H1 (cell line): ENCODE measurements at regions of chr12 and their contacts with region 1.

Region 1: DNA sequence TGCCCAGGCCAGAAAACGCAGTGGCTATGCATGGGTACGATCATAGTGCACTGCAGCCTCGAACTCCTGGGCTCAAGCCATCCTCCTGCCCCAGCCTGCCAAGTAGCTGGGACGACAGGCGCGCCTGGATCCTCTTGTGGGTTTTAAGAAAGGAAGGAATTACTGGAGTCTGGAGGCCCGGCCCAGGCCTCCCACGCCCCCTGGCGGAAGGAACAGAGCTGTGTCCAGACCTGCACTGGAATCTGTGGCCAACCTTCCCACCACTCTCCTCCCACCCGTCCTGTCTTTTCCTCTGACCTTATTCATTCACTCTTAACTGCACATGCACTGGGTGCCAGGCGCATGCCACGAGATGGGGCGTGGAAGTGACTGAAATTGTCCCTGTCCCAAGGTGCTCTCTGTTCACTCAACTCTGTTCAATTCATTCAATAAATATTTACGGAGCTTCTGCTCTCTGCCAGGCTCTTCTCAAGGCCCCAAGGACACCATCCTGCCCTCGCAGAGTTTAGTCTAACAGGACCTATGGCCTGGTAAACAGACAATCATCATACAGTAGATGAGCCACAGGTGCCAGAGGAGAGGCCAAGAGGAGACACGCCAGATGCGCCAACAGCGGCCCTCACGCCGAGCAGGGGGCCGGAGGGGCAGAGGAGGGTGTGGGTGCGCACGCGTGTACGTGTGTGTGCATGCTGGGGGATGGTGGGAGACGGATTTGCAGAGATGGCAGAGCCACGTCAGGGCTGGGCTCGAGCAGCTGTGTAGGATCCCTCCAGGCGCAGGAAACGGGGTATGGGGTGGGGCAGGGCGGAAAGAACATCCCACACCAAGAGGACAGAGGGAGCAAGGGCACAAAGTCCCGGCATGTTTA is 13.7 kb upstream of the TMEM106C start:
- DNase-seq: peak; percentile 61 to 87
- H3K4me3 ChIP-seq: no peak overlapping the region
- H3K27ac ChIP-seq: no peak overlapping the region
- H3K4me1 ChIP-seq: no peaks in the 10 kb centered on the region; a peak in 2 of 7 replicates
- H3K27me3 ChIP-seq: no peaks in the 10 kb centered on the region; a peak in 1 of 7 replicates
- CTCF ChIP-seq: peak in 2 of 3 experiments; percentile 92 to 93; a peak in 3 of 4 replicates
- EP300 ChIP-seq: no peak
- POLR2A ChIP-seq: no peak
- RAD21 ChIP-seq: peak; percentile 78 to 85

Region 2: DNA sequence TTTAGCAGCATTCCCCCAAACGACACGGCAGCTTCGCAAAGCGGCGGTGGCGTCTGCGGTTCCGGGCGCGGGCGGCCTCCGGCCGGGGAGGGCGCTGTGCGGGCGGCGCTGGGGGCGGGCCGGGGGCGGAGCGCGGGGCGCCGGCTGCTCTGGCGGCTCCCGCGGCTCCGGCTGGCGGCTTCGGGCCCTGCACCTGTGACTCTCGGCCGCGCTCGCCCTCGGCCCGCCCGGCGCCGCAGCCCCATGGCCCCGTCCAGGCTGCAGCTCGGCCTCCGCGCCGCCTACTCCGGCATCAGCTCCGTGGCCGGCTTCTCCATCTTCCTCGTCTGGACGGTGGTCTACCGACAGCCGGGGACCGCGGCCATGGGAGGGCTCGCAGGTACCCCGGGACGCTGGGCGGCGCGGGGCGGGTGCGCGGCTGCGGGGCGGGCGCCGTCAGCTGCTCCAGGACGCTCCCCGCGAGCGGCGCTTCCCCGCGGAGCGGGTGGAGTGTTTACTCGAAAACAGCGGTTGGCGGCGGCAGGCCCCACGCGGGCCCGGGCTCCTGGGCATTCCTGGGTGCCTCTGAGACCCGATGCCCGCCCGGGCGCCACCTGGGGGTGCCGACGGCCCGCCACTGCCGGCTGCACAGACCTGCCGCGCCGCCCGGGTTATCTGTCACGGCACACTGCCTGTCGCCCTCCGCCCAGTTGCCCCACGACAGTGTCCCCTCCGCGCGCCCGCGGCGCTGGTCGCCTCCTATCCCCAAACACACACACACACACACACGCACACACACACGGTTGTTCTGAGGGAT is 176.4 kb before region 1 on chr12 and contains the start of gene SLC48A1:
- CTCF ChIA-PET with region 1: no interaction called
- POLR2A ChIA-PET with region 1: no interaction called
- DNase-seq: peak in 1 of 2 experiments; percentile 85
- H3K4me3 ChIP-seq: peak within 1 kb of the TSS; percentile 55 to 91 (median 56)
- H3K27ac ChIP-seq: no peak within 1 kb of the TSS
- H3K4me1 ChIP-seq: peaks cover 9 to 17% (median 12%) of the 10 kb centered on the region in 4 experiments
- H3K27me3 ChIP-seq: peaks cover 0 to 17% (median 8%) of the 10 kb centered on the region in 4 experiments; a peak in 4 of 7 replicates
- CTCF ChIP-seq: peak in 2 of 3 experiments; percentile 38 to 55; a peak in 3 of 4 replicates
- EP300 ChIP-seq: no peak
- POLR2A ChIP-seq: no peak
- RAD21 ChIP-seq: 0 out of 4 replicates have a peak, but pooled peaks of 1 of the 2 experiments have one; percentile 2
- total RNA-seq, gene SLC48A1: 14.0 and 14.1 TPM in 2 replicates

Region 3: GRCh38 chr12:47894068-47894467 is 55.6 kb before region 1 on chr12:
- CTCF ChIA-PET with region 1: interaction called, 27 read pairs
- POLR2A ChIA-PET with region 1: interaction called, 3 read pairs
- DNase-seq: no peak
- H3K4me3 ChIP-seq: no peak overlapping the region
- H3K27ac ChIP-seq: no peak overlapping the region
- H3K4me1 ChIP-seq: no peaks in the 10 kb centered on the region
- H3K27me3 ChIP-seq: peaks cover 0 to 6% (median 3%) of the 10 kb centered on the region in 4 experiments; a peak in 3 of 7 replicates
- CTCF ChIP-seq: no peak
- EP300 ChIP-seq: no peak
- POLR2A ChIP-seq: no peak
- RAD21 ChIP-seq: no peak

Region 4: DNA sequence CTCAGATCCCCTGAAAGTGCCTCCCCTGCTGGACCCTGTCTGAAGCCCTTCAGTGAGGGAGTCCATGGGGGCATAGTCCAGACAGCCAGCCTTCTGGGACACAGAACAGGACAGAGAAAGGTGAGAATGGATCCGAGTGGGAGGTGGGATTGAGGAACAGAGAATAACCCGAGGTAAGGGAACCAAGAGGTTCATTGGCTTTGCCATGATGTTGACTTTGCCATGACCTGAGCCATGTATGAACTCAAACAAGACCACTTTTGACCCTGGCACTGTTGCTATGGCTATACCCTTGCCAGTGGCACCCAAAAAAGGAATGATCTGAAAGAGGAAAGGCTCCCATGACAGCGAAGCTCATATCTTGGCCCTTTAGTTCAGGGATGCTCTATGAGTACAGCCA is 22.3 kb before region 1 on chr12:
- CTCF ChIA-PET with region 1: interaction called, 38 read pairs
- POLR2A ChIA-PET with region 1: no interaction called
- DNase-seq: no peak
- H3K4me3 ChIP-seq: no peak overlapping the region
- H3K27ac ChIP-seq: no peak overlapping the region
- H3K4me1 ChIP-seq: no peaks in the 10 kb centered on the region
- H3K27me3 ChIP-seq: peaks cover 2 to 7% (median 3%) of the 10 kb centered on the region in 4 experiments; a peak in 2 of 7 replicates
- CTCF ChIP-seq: no peak
- EP300 ChIP-seq: no peak
- POLR2A ChIP-seq: no peak
- RAD21 ChIP-seq: no peak

Region 5: GRCh38 chr12:47963340-47964040 is 13.8 kb after region 1 on chr12 and contains the start of gene TMEM106C:
- CTCF ChIA-PET with region 1: interaction called, 82 read pairs
- POLR2A ChIA-PET with region 1: no interaction called
- DNase-seq: peak; percentile 87 to 97
- H3K4me3 ChIP-seq: peak within 1 kb of the TSS; percentile 38 to 66 (median 58)
- H3K27ac ChIP-seq: no peak within 1 kb of the TSS
- H3K4me1 ChIP-seq: peaks cover 0 to 9% (median under 1%) of the 10 kb centered on the region in 4 experiments; a peak in 5 of 7 replicates
- H3K27me3 ChIP-seq: peaks cover 1 to 25% (median 16%) of the 10 kb centered on the region in 4 experiments
- CTCF ChIP-seq: peak; percentile 88 to 98 (median 98)
- EP300 ChIP-seq: peak in 1 of 2 experiments; percentile 44; a peak in 1 of 3 replicates
- POLR2A ChIP-seq: no peak
- RAD21 ChIP-seq: peak; percentile 63 to 80
- total RNA-seq, gene TMEM106C: 36.6 and 37.0 TPM in 2 replicates